Left colon (tissue), 2 donors: ENCODE measurements at regions of chr9 and their contacts with region 1.

Region 1: DNA sequence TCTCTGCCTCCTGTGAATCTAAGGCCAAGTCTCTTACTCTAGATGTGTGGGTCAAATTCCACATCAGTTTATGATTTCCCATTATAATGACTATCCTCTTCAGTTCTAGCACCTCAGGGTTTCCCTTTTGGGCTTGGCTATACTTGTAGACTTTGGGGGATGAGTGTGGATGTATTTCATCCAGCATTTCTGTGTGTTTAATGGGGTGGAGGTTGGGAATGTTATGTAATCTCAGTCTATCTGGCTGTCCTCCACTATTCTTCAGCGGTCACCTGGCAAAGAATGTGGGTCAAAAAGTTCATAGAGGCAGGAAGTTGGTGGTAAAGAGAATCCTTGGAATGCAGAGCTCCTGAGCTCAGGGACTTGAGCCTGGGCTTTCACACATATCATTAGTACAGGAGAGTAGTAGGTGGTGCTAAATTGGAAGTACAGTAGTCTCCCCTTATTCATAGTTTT is 64.9 kb downstream of the CFAP95 start:
- DNase-seq: peak in 1 of 2 donors; percentile 21
- ATAC-seq: peak; percentile 88

Region 2: DNA sequence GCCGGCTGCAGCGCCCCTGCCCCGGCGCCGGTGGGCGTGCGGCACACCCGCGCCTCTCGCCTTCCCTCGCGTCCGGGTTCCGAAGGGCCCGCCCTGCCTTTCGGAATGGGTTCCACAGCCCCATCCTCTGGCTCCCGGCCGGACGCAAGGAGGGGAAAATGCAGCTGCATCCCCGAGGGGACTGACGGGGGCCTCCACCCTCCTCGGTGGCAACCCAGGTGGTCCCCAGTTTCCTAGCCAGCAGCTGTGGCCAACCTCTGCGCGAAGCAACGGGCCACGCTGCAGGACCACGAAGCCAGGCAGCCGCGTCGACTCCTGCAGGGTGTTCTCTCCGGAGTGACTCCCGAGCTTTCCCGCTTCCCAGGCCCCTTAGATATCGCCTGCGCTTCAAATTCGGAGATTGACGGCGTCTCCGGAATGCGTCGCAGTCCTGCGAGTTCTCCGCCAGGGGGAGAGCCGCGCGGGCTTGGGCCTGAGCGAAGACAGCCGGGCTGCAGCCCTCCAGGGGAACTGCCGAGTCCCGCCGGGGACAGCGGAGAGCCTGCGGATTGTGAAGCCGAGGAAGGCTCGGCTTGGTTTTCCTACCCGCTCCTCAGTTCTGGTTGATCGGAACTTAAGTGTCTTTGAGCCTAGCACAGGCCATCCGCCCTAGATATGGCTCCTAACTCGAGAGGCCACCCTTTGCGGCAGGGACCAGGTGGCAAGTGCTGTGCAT is 212.7 kb before region 1 on chr9:
- intact Hi-C with region 1: loop called in 1 of 2 experiments (anchors 10 kb)
- DNase-seq: peak; percentile 76 to 85
- ATAC-seq: peak; percentile 87

Region 3: DNA sequence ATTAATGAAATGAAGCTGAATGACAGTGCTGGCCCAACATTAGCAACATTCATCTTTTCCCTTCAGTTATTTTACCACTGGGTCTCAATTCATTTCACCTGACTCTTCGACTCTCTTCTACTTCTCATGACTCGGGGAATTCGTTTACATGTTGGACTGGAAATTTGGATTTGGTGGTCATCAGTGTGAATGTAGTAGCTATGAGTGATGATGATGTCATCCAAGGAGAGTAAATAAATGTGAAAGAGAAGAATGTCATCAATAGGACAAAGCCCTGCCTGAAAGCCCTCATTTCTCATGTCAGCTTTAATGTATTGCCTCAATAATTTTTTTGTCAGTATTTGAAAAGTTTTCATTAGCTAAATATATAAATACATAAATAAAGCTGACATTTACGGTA is 86.8 kb before region 1 on chr9:
- intact Hi-C with region 1: no loop called
- DNase-seq: no peak
- ATAC-seq: no peak